ENCODE measurements at regions of chr17 and their contacts with region 1.

Region 1: GRCh38 chr17:65100316-65101140 is 36.6 kb upstream of the RGS9 start:
- DNase-seq: peak; percentile 82
- ATAC-seq: peak; percentile 84
- H3K4me3 Mint-ChIP-seq: peak overlapping the region; percentile 85
- H3K27ac Mint-ChIP-seq: peak overlapping the region; percentile 98
- H3K4me1 Mint-ChIP-seq: peaks cover 23% of the 10 kb centered on the region
- H3K27me3 Mint-ChIP-seq: peaks cover 5% of the 10 kb centered on the region
- CTCF ChIP-seq: no peak

Region 2: DNA sequence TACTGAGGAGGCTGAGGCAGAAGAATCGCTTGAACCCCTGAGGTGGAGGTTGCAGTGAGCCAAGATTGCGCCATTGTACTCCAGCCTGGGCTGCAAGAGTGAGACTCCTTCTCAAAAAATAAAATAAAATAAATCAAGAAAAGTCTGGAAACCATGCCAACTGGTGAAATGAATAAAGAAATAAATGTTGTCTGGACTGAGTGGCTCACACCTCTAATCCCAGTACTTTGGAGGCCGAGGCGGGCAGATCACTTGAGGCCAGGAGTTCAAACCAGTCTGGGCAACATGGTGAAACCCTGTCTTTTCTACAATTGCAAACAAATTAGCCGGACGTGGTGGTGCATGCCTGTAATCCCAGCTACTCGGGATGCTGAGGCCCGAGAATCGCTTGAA is 180.5 kb before region 1 on chr17:
- CTCF ChIA-PET with region 1: interaction called, 4 read pairs
- POLR2A ChIA-PET with region 1: interaction called, 17 read pairs
- intact Hi-C with region 1: loop called (anchors 2 kb)
- DNase-seq: no peak
- ATAC-seq: no peak
- H3K4me3 Mint-ChIP-seq: peak overlapping the region; percentile 87
- H3K27ac Mint-ChIP-seq: peak overlapping the region; percentile 92
- H3K4me1 Mint-ChIP-seq: peaks cover 47% of the 10 kb centered on the region
- H3K27me3 Mint-ChIP-seq: no peaks in the 10 kb centered on the region
- CTCF ChIP-seq: no peak

Region 3: DNA sequence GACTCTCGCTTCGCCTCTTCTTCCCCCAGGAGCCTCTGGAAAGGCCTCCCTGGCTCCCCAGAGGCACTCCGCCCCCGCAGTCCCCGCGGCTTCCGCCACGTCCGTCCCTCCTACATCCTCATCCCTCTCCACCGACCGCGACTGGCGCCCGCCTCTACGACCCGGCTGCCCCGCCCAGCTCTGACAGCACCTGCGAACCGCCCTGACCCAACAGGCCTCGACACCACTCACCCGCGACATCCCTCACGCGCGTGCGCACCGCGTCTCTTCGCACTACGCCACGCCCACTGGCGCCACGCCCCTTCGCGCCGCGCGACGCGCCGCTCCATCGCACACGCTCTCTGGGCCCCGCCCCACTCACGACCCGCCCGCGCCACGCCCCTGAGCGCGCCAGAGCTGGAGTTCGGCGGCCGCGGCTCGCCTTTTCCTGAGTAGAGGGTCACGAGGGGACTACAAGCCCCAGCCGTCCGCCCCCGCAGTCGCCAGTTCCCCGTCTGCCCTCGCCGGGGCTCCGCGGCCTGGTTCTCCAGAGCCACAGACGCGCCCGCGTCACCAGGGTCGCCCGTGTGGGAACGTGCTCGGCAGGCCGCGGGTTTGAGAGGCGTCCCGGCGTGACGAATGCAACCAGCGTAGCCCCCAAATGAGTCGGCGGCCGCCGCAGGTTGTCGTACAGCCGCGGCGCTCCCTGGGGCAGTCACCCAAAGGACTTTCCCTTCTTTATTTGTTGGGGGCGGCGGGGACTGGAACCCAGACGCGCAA is 125.0 kb before region 1 on chr17:
- CTCF ChIA-PET with region 1: interaction called, 17 read pairs
- POLR2A ChIA-PET with region 1: interaction called, 49 read pairs
- intact Hi-C with region 1: loop called (anchors 1 kb)
- DNase-seq: peak; percentile 98
- ATAC-seq: peak; percentile 76
- H3K4me3 Mint-ChIP-seq: peak overlapping the region; percentile 92
- H3K27ac Mint-ChIP-seq: peak overlapping the region; percentile 99
- H3K4me1 Mint-ChIP-seq: peaks cover 57% of the 10 kb centered on the region
- H3K27me3 Mint-ChIP-seq: no peaks in the 10 kb centered on the region
- CTCF ChIP-seq: no peak

Region 4: GRCh38 chr17:65122836-65123756 is 22.6 kb after region 1 on chr17:
- CTCF ChIA-PET with region 1: interaction called, 4 read pairs
- POLR2A ChIA-PET with region 1: interaction called, 36 read pairs
- intact Hi-C with region 1: loop called (anchors 1 kb)
- DNase-seq: peak; percentile 64
- ATAC-seq: peak; percentile 85
- H3K4me3 Mint-ChIP-seq: peak overlapping the region; percentile 87
- H3K27ac Mint-ChIP-seq: peak overlapping the region; percentile 96
- H3K4me1 Mint-ChIP-seq: peaks cover 18% of the 10 kb centered on the region
- H3K27me3 Mint-ChIP-seq: peaks cover 5% of the 10 kb centered on the region
- CTCF ChIP-seq: no peak

Region 5: GRCh38 chr17:65198653-65199382 is 98.3 kb after region 1 on chr17:
- CTCF ChIA-PET with region 1: interaction called, 7 read pairs
- POLR2A ChIA-PET with region 1: no interaction called
- intact Hi-C with region 1: loop called (anchors 1 kb)
- DNase-seq: no peak
- ATAC-seq: peak; percentile 67
- H3K4me3 Mint-ChIP-seq: no peak overlapping the region
- H3K27ac Mint-ChIP-seq: peak overlapping the region; percentile 8
- H3K4me1 Mint-ChIP-seq: no peaks in the 10 kb centered on the region
- H3K27me3 Mint-ChIP-seq: peaks cover 2% of the 10 kb centered on the region
- CTCF ChIP-seq: peak; percentile 78

Region 6: GRCh38 chr17:65314212-65314611 is 213.7 kb after region 1 on chr17:
- CTCF ChIA-PET with region 1: no interaction called
- POLR2A ChIA-PET with region 1: no interaction called
- intact Hi-C with region 1: no loop called
- DNase-seq: no peak
- ATAC-seq: no peak
- H3K4me3 Mint-ChIP-seq: no peak overlapping the region
- H3K27ac Mint-ChIP-seq: no peak overlapping the region
- H3K4me1 Mint-ChIP-seq: no peaks in the 10 kb centered on the region
- H3K27me3 Mint-ChIP-seq: peaks cover 28% of the 10 kb centered on the region
- CTCF ChIP-seq: no peak

Measured in activated B cell treated with CpG ODN at 0.5 μM for 24 hours (primary cell).